Activated CD4-positive, alpha-beta T cell treated with anti-CD3 and anti-CD28 coated beads for 36 hours (primary cell): ENCODE measurements at regions of chr20 and their contacts with region 1.

Region 1: DNA sequence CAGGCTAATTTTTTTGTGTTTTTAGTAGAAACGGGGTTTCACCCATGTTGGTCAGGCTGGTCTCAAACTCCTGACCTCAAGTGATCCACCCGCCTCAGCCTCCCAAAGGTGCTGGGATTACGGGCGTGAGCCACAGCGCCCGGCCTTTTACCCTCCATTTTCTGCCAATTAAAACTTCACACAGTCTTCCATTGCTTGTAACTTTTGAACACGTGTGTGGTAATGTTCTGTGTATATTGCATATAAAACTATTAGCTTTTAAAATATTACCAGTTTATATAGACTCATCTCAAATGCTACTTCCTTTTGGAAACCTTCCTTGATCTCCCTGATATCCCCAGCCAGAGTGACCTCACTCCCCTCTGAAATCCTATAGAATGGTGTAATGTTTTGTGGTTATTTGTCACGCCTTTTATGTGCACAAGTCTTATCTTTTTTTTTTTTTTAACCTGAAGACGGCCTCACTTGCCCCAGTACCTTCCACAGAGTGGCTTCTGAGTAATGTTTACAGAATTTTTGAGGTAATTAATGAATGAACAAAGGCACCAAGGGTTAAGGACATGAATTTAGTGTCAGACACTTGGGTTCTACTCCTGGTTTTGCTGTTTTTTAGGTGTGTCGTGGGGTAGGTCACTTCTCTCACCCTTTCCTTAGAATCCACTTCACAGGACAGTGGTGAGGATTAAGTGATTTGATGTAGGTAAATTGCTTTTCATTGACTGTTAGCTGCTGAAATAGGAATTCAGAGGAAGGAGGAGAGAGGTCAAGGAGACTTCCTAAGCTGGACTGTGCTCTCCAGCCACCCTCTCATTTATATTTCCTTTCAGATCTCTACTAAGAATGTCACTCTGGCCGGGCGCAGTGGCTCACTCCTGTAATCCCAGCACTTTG is 11.2 kb upstream of the MMP24 start:
- DNase-seq: no peak
- ATAC-seq: no peak
- H3K4me3 Mint-ChIP-seq: no peak overlapping the region
- H3K27ac Mint-ChIP-seq: no peak overlapping the region
- H3K4me1 Mint-ChIP-seq: no peaks in the 10 kb centered on the region
- H3K27me3 Mint-ChIP-seq: no peaks in the 10 kb centered on the region

Region 2: GRCh38 chr20:35269055-35269781 is 53.9 kb after region 1 on chr20:
- CTCF ChIA-PET with region 1: no interaction called
- POLR2A ChIA-PET with region 1: interaction called, 11 read pairs
- intact Hi-C with region 1: no loop called
- DNase-seq: peak; percentile 74
- ATAC-seq: peak; percentile 82
- H3K4me3 Mint-ChIP-seq: no peak overlapping the region
- H3K27ac Mint-ChIP-seq: no peak overlapping the region
- H3K4me1 Mint-ChIP-seq: no peaks in the 10 kb centered on the region
- H3K27me3 Mint-ChIP-seq: no peaks in the 10 kb centered on the region